ENCODE measurements at regions of chr19 and their contacts with region 1.

Region 1: DNA sequence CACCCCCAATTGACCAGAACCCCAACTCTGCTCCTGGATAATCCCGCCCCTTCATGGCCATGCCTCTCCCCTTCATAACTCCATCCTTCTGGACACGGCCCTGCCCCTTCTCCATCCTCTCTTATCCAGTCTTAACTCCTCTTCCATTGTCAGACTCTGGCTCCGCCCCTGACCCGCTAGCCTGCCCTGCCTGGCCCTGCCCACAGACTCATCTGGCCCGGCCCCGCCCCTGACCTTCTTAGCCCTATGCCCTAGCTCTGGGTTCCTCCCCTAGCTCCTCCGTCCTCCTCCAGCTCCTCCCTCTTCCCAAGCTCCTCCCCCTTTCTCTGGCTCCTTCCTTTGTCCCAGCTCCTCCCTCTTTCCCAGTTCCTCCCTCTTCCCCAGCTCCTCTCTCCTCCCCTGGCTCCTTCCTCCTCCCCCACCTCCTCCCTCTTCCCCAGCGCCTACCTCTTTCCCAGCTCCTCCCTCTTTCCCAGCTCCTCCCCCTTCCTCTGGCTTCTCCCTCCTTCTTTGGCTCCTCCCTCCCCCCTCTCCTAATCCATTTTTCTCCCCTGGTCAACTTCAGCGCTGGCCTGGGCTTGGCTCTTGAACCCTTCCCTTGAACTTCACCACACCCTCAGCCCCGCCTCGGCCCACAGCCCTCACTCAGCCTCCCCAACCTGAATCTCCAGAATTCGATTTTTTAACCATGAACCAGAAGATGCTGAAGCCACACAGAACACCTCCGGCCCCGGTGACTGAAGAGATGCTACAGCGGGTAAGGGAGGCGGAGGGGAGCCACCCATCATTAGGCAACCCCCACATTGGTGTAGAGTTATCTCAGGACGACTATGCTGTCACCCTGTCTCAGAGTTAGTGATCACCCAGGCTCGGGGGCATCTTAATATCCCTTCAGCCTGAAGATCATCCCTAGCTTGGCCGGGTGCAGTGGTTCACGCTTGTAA is 9.2 kb upstream of the ZNF358 start:
- DNase-seq: peak; percentile 51
- H3K4me3 Mint-ChIP-seq: no peak overlapping the region
- H3K27ac Mint-ChIP-seq: no peak overlapping the region
- H3K4me1 Mint-ChIP-seq: peaks cover 11% of the 10 kb centered on the region
- H3K27me3 Mint-ChIP-seq: peaks cover 17% of the 10 kb centered on the region

Region 2: DNA sequence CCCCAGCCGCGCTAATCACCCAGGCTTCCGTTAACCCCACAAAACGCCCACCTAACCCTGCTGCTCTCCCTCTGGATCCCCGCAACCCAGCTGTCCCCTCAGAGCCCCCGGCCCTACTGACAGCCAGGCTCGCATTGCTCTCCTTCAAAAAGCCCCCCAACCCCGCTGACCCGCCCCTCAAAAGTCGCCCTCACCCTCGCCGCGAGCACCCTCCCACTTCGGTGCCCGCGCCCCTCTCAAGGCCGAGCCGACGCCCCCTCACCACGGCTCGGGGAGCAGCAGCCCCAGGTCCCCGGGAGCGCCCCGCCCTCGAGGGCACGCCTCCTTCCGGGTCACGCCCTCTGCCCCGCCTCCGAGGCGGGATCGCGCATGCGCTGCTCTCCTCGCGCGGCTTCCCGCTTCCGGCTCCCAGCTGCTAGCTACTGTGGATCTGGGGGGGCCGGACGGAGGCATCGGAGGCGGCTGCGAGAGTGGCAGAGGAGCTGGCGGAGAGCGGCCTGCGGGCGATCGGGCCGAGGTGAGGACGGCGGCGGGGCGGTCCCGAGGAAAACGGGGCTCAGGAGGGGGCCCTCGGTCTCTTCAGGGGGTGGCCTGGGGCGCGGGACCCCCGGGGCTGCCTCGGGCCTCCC is 111.8 kb before region 1 on chr19:
- intact Hi-C with region 1: loop called (anchors 10 kb)
- DNase-seq: peak; percentile 92
- H3K4me3 Mint-ChIP-seq: peak overlapping the region; percentile 87
- H3K27ac Mint-ChIP-seq: peak overlapping the region; percentile 68
- H3K4me1 Mint-ChIP-seq: peaks cover 13% of the 10 kb centered on the region
- H3K27me3 Mint-ChIP-seq: no peaks in the 10 kb centered on the region

Region 3: DNA sequence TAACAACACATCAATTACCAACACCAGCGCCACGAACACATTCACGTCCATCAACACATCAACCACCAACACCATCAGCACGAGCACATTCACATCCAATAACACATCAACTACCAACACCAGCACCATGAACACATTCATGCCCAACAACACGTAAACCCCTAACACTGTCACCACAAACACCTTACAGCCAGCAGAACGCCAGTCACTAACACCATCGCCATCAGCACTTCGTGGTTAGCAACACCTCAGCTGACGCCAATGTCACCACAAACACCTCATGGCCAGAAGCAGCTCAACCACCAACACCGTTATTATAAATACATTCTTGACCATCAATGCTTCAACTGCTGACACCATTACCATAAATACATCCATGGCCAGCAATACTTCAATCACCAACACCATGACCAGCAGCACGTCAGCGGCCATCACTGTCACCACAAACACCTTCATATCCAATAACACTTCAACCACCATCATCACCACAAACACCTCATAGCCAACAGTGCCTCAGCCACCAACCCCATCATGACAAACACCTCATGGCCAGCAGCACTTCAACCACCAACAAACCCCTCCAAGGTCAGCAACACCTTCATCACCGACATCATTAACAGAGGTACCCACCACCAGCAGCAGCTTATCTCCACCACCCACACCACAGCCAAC is 185.9 kb after region 1 on chr19:
- intact Hi-C with region 1: no loop called
- DNase-seq: no peak
- H3K4me3 Mint-ChIP-seq: no peak overlapping the region
- H3K27ac Mint-ChIP-seq: no peak overlapping the region
- H3K4me1 Mint-ChIP-seq: no peaks in the 10 kb centered on the region
- H3K27me3 Mint-ChIP-seq: peaks cover 11% of the 10 kb centered on the region

Measured in activated T-helper 2 cell treated with anti-CD3 and anti-CD28 coated beads, Interferon-gamma antibody, Interleukin-2, Interleukin-4, amounts not matched to agents 10 μg/mL and 5 μg/mL and 100 μg/mL, durations not matched to agents 14 hours and 24 hours and 36 hours (primary cell).